PC-9 (cell line): ENCODE measurements at regions of chr2 and their contacts with region 1.

Region 1: GRCh38 chr2:138827426-138828054 is 47.4 kb upstream of the NXPH2 start:
- DNase-seq: peak; percentile 15 to 56
- H3K4me3 ChIP-seq: no peak overlapping the region
- H3K27ac ChIP-seq: no peak overlapping the region
- H3K4me1 ChIP-seq: peaks cover 17% of the 10 kb centered on the region; the same call in 1 of the 2 replicates
- H3K27me3 ChIP-seq: no peaks in the 10 kb centered on the region
- CTCF ChIP-seq: peak; percentile 78

Region 2: GRCh38 chr2:137865954-137866540 is 961.5 kb before region 1 on chr2:
- CTCF ChIA-PET with region 1: interaction called, 7 read pairs
- POLR2A ChIA-PET with region 1: no interaction called
- intact Hi-C with region 1: loop called (anchors 1 kb)
- DNase-seq: peak in 1 of 2 experiments; percentile 48
- H3K4me3 ChIP-seq: no peak overlapping the region
- H3K27ac ChIP-seq: no peak overlapping the region
- H3K4me1 ChIP-seq: no peaks in the 10 kb centered on the region
- H3K27me3 ChIP-seq: no peaks in the 10 kb centered on the region
- CTCF ChIP-seq: peak; percentile 73

Region 3: DNA sequence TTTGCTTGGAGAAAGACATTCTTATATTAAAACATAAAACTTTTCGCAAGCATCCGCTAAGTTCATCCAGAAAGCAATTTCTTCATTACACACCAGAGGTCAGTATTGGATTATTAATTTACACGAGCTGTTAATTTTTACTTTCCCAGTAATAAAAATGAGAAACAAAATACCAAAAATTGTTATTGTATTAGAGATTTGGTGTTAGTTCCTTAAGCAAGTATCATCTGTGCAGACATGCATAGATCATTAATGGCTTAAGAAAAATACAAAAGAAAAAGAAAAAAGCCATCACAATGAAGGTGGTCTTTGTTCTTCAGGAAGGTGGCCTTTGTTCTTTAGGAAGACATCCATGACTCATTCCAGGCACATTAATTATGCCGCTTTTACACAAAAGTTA is 916.9 kb before region 1 on chr2:
- CTCF ChIA-PET with region 1: interaction called, 5 read pairs
- POLR2A ChIA-PET with region 1: no interaction called
- intact Hi-C with region 1: loop called (anchors 1 kb)
- DNase-seq: no peak
- H3K4me3 ChIP-seq: no peak overlapping the region
- H3K27ac ChIP-seq: no peak overlapping the region
- H3K4me1 ChIP-seq: no peaks in the 10 kb centered on the region
- H3K27me3 ChIP-seq: no peaks in the 10 kb centered on the region
- CTCF ChIP-seq: peak; percentile 81

Region 4: GRCh38 chr2:137947728-137948336 is 879.7 kb before region 1 on chr2:
- CTCF ChIA-PET with region 1: interaction called, 3 read pairs
- POLR2A ChIA-PET with region 1: no interaction called
- intact Hi-C with region 1: loop called (anchors 1 kb)
- DNase-seq: peak; percentile 51 to 59
- H3K4me3 ChIP-seq: no peak overlapping the region
- H3K27ac ChIP-seq: no peak overlapping the region
- H3K4me1 ChIP-seq: peaks cover 1% of the 10 kb centered on the region; the same call in 1 of the 2 replicates
- H3K27me3 ChIP-seq: no peaks in the 10 kb centered on the region
- CTCF ChIP-seq: peak; percentile 81

Region 5: DNA sequence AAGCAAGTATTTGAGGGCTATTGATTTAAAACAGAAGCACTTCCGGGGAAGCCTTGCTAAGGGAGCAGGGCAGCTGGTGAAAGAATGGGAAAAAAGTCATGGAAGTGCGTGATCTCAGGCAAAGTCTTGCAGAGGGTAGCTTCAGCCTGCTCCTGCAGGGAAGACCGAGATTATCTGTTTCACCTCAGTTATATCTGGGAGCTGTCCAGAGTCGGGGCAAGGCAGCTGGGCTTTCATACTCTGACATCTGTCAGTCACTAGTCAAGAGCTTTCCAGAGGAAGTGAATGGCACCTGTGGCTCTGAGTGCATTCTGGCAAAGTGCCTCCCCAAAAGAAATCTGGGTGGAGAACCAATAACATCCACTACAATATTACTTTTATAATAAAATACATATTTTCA is 56.0 kb before region 1 on chr2:
- CTCF ChIA-PET with region 1: no interaction called
- POLR2A ChIA-PET with region 1: no interaction called
- intact Hi-C with region 1: no loop called
- DNase-seq: no peak
- H3K4me3 ChIP-seq: no peak overlapping the region
- H3K27ac ChIP-seq: no peak overlapping the region
- H3K4me1 ChIP-seq: no peaks in the 10 kb centered on the region
- H3K27me3 ChIP-seq: no peaks in the 10 kb centered on the region
- CTCF ChIP-seq: no peak